Sigmoid colon (tissue), 7 donors: ENCODE measurements at regions of chr1 and their contacts with region 1.

Region 1: DNA sequence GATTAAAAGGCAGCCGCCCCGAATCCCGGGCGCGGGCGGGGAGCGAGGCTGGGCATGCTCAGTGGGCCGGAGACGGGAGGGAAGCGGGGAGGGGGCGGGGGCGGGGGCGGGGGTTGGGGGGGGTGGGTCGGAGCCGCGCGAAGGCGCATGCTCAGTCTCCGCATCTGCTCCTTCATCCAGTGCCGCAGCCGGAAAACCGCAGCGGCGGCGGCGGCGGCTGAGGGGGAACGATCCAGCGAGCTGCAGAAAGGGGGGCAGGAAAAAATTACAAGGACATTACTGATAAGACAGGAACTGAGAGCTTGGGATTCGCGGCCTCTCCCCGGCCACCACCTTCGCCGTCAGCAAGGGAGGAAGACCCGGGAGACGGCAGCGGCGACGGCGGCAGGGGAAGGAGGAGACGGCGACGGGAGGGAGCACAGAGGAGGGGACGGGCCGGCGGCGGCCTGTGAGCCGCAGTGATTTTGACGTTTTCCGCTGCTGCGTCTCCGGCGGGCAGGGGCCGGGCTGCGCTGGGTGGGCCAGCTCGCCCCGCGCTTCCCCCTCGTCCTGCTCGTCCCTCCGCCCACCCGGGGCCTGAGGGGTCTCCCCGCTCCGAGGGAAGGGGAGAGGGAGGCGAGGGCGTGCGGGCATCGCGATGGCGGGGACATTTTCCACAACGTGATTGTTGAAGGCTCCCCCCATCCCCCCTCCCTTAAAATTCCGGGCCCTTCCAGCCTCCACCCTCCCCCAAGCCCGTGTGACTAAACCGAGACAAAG is at the start of gene CAMSAP2:
- DNase-seq: peak; percentile 97
- H3K4me3 ChIP-seq: peak within 1 kb of the TSS; percentile 73 to 96 (median 88)
- H3K27ac ChIP-seq: peak within 1 kb of the TSS; percentile 97 to 100 (median 100)
- H3K4me1 ChIP-seq: peaks cover 0 to 40% (median 32%) of the 10 kb centered on the region in 4 donors
- H3K27me3 ChIP-seq: no peaks in the 10 kb centered on the region
- CTCF ChIP-seq: no peak
- EP300 ChIP-seq: peak in 1 of 4 donors; percentile 10
- POLR2A ChIP-seq: peak; percentile 86 to 93
- total RNA-seq, gene CAMSAP2: 31.8 to 40.7 (median 38.6) TPM

Region 2: GRCh38 chr1:200620273-200621131 is 118.4 kb before region 1 on chr1 and contains the start of gene KIF14:
- intact Hi-C with region 1: loop called (anchors 2 kb)
- DNase-seq: peak; percentile 95
- H3K4me3 ChIP-seq: peak within 1 kb of the TSS; percentile 45 to 65 (median 60)
- H3K27ac ChIP-seq: peak within 1 kb of the TSS; percentile 37 to 66 (median 50)
- H3K4me1 ChIP-seq: peaks cover 0 to 19% (median 8%) of the 10 kb centered on the region in 4 donors
- H3K27me3 ChIP-seq: no peaks in the 10 kb centered on the region
- CTCF ChIP-seq: no peak
- EP300 ChIP-seq: no peak
- POLR2A ChIP-seq: no peak
- total RNA-seq, gene KIF14: under 0.01 to 0.28 (median 0.27) TPM in 3 of 4 donors, not detected in the other

Region 3: GRCh38 chr1:200669314-200670241 is 69.3 kb before region 1 on chr1 and contains the start of gene DDX59:
- intact Hi-C with region 1: loop called (anchors 1 kb)
- DNase-seq: peak; percentile 98
- H3K4me3 ChIP-seq: peak within 1 kb of the TSS; percentile 67 to 99 (median 79)
- H3K27ac ChIP-seq: peak within 1 kb of the TSS; percentile 95 to 100 (median 98)
- H3K4me1 ChIP-seq: peaks cover 6 to 27% (median 26%) of the 10 kb centered on the region in 4 donors
- H3K27me3 ChIP-seq: no peaks in the 10 kb centered on the region
- CTCF ChIP-seq: no peak
- EP300 ChIP-seq: peak; percentile 3 to 69 (median 40)
- POLR2A ChIP-seq: peak; percentile 83 to 87
- total RNA-seq, gene DDX59: 24.0 to 29.6 (median 27.1) TPM

Region 4: DNA sequence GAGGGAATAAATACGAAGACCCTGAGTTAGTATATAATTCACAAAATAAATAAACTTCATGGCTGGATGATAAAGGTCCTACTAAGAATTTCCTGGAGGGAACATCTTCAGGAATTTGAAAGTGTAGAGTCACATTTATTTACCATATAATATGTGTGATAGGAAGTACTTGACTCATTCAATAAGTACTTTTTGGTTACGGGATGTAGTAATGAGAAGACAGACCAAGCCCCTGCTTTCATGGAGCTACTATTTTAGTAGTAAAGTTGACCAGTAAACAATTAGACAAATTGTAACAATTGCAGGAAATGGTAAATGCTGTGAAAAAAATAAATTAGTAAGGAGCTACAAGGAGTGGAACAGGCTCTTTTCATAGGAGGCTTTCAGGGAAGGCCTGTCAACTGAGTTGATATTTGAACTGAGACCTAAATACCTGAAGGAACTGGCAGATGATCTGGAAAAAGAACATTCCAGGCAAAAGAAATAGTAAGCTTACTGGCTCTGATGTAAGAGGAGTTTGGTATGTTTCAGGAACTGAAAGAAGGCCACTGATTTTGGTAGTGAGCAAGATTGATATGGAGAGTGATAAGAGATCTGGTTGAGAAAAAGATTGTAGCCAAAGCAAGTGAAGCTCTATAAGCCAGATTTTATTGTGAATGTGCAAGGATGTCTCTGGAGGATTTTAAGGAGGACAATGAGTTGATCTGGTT is 36.0 kb after region 1 on chr1:
- intact Hi-C with region 1: loop called (anchors 5 kb)
- DNase-seq: no peak
- H3K4me3 ChIP-seq: no peak overlapping the region
- H3K27ac ChIP-seq: peak overlapping the region in 2 of 4 donors; percentile 20 to 56
- H3K4me1 ChIP-seq: peaks cover 0 to 29% (median 19%) of the 10 kb centered on the region in 4 donors
- H3K27me3 ChIP-seq: no peaks in the 10 kb centered on the region
- CTCF ChIP-seq: no peak
- EP300 ChIP-seq: no peak
- POLR2A ChIP-seq: no peak

Region 5: GRCh38 chr1:200802865-200803512 is 64.1 kb after region 1 on chr1:
- intact Hi-C with region 1: loop called (anchors 1 kb)
- DNase-seq: peak; percentile 89
- H3K4me3 ChIP-seq: no peak overlapping the region
- H3K27ac ChIP-seq: no peak overlapping the region
- H3K4me1 ChIP-seq: peaks cover 0 to 21% (median 8%) of the 10 kb centered on the region in 4 donors
- H3K27me3 ChIP-seq: no peaks in the 10 kb centered on the region
- CTCF ChIP-seq: peak; percentile 84 to 98 (median 90)
- EP300 ChIP-seq: no peak
- POLR2A ChIP-seq: no peak

Region 6: GRCh38 chr1:200890818-200891773 is 152.2 kb after region 1 on chr1:
- intact Hi-C with region 1: no loop called
- DNase-seq: peak; percentile 62
- H3K4me3 ChIP-seq: peak overlapping the region; percentile 18 to 47 (median 38)
- H3K27ac ChIP-seq: no peak overlapping the region
- H3K4me1 ChIP-seq: peaks cover 0 to 14% (median 12%) of the 10 kb centered on the region in 4 donors
- H3K27me3 ChIP-seq: peaks cover 6 to 41% (median 25%) of the 10 kb centered on the region in 3 donors
- CTCF ChIP-seq: no peak
- EP300 ChIP-seq: no peak
- POLR2A ChIP-seq: no peak